ENCODE measurements at regions of chr1 and their contacts with region 1.

Region 1: GRCh38 chr1:234722904-234723720 is 113.1 kb upstream of the IRF2BP2 start:
- DNase-seq: peak; percentile 44
- H3K4me3 ChIP-seq: peak overlapping the region; percentile 7
- H3K27ac ChIP-seq: peak overlapping the region; percentile 98
- H3K4me1 ChIP-seq: peaks cover 61% of the 10 kb centered on the region
- H3K27me3 ChIP-seq: no peaks in the 10 kb centered on the region
- CTCF ChIP-seq: no peak

Region 2: DNA sequence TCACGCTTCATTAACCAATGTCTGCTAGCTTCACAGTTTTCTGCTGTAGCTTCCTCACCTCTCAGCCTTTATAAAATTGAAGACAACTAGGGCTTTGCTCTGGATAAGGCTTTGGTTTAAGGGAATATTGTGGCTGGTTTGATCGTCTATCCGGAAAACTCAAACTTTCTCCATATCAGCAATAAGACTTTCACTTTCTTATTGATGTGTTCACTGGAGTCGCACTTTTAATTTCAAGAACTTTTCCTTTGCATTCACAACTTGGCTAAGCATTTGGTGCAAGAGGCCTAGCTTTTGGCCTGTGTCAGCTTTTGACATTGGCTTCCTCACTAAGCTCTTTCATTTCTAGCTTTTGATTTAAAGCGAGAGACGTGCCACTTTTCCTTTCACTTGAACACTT is 337.0 kb before region 1 on chr1:
- CTCF ChIA-PET with region 1: no interaction called
- POLR2A ChIA-PET with region 1: no interaction called
- intact Hi-C with region 1: no loop called
- DNase-seq: no peak
- H3K4me3 ChIP-seq: no peak overlapping the region
- H3K27ac ChIP-seq: no peak overlapping the region
- H3K4me1 ChIP-seq: no peaks in the 10 kb centered on the region
- H3K27me3 ChIP-seq: no peaks in the 10 kb centered on the region
- CTCF ChIP-seq: no peak

Region 3: DNA sequence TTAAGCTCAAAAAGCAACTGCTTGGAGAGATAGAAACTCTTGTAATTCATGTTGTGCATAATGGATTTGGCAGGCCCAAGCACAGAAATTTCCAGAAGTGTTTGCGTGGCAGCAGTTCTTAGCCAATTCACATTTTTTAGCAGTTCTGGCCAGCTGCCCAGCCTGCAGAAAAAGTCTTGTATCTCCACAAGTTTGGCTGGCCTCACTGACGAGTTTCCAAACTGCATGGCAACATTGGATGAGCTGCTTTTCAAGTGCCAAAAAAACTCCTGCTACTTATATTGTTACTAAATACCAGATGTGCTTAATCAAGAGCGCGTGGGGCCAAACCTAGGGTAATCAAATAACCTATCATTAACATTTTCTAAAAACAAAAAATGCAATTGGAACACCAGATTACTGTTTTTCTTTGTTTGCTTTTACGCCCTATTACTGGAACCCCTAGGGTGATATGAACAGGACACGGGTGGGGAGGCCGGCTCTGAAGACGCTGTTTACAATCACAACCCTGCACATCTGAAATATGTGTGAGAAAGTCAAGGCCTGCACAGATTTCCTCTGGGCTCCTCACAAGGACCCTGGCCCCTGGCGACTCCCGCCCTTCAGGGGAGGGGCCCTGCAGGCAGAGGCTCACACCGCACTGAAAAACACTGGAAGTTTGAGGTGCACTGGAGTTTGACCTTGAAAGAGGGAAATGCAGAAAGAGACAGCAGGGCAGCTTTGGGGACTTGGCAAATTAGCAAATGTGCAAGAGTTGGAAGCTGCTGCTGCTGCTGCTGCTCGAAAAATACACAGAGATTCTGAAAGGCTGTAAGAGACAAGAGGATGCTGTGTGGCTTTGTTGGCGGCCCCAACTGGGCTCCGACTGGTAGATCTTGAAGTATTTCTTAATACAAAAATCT is 188.9 kb before region 1 on chr1:
- CTCF ChIA-PET with region 1: no interaction called
- POLR2A ChIA-PET with region 1: interaction called, 13 read pairs
- intact Hi-C with region 1: no loop called
- DNase-seq: peak; percentile 89
- H3K4me3 ChIP-seq: no peak overlapping the region
- H3K27ac ChIP-seq: peak overlapping the region; percentile 84
- H3K4me1 ChIP-seq: peaks cover 58% of the 10 kb centered on the region
- H3K27me3 ChIP-seq: no peaks in the 10 kb centered on the region
- CTCF ChIP-seq: no peak

Region 4: GRCh38 chr1:234610348-234611152 is 112.6 kb before region 1 on chr1:
- CTCF ChIA-PET with region 1: interaction called, 6 read pairs
- POLR2A ChIA-PET with region 1: interaction called, 17 read pairs
- intact Hi-C with region 1: loop called (anchors 5 kb)
- DNase-seq: peak; percentile 89
- H3K4me3 ChIP-seq: peak overlapping the region; percentile 43
- H3K27ac ChIP-seq: peak overlapping the region; percentile 98
- H3K4me1 ChIP-seq: peaks cover 35% of the 10 kb centered on the region
- H3K27me3 ChIP-seq: no peaks in the 10 kb centered on the region
- CTCF ChIP-seq: no peak

Region 5: GRCh38 chr1:234774971-234775370 is 51.9 kb after region 1 on chr1:
- CTCF ChIA-PET with region 1: no interaction called
- POLR2A ChIA-PET with region 1: no interaction called
- intact Hi-C with region 1: no loop called
- DNase-seq: no peak
- H3K4me3 ChIP-seq: no peak overlapping the region
- H3K27ac ChIP-seq: no peak overlapping the region
- H3K4me1 ChIP-seq: peaks cover under 1% of the 10 kb centered on the region
- H3K27me3 ChIP-seq: peaks cover 35% of the 10 kb centered on the region
- CTCF ChIP-seq: no peak

Region 6: GRCh38 chr1:234893725-234894630 is 170.9 kb after region 1 on chr1:
- CTCF ChIA-PET with region 1: no interaction called
- POLR2A ChIA-PET with region 1: no interaction called
- intact Hi-C with region 1: no loop called
- DNase-seq: no peak
- H3K4me3 ChIP-seq: no peak overlapping the region
- H3K27ac ChIP-seq: no peak overlapping the region
- H3K4me1 ChIP-seq: no peaks in the 10 kb centered on the region
- H3K27me3 ChIP-seq: no peaks in the 10 kb centered on the region
- CTCF ChIP-seq: no peak

Region 7: GRCh38 chr1:235357485-235358378 is 634.6 kb after region 1 on chr1:
- CTCF ChIA-PET with region 1: no interaction called
- POLR2A ChIA-PET with region 1: no interaction called
- intact Hi-C with region 1: no loop called
- DNase-seq: no peak
- H3K4me3 ChIP-seq: no peak overlapping the region
- H3K27ac ChIP-seq: no peak overlapping the region
- H3K4me1 ChIP-seq: no peaks in the 10 kb centered on the region
- H3K27me3 ChIP-seq: no peaks in the 10 kb centered on the region
- CTCF ChIP-seq: no peak